Colonic mucosa (tissue), 4 donors: ENCODE measurements at regions of chr11 and their contacts with region 1.

Region 1: DNA sequence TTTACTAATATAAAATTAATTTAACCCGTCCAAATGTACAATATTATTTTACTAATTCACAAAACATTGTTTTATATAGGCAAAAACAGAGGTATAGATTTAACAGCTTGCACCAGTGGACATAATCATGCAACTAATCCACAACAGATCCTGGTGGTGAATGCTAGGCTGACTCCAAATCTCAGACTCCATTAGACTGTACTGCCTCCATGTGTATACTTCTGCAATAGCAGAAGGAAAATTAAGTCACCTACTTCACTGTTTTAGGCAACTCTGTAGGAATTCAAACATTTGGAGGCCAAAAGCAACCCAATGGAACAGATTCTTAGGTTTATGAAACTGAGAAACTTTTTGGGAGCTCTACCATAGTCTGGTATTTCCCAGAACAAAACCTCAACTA is 30.0 kb upstream of the RAB39A start:
- DNase-seq: no peak
- H3K4me3 ChIP-seq: no peak overlapping the region
- H3K27ac ChIP-seq: no peak overlapping the region
- H3K4me1 ChIP-seq: no peaks in the 10 kb centered on the region
- H3K27me3 ChIP-seq: no peaks in the 10 kb centered on the region
- CTCF ChIP-seq: peak; percentile 48

Region 2: DNA sequence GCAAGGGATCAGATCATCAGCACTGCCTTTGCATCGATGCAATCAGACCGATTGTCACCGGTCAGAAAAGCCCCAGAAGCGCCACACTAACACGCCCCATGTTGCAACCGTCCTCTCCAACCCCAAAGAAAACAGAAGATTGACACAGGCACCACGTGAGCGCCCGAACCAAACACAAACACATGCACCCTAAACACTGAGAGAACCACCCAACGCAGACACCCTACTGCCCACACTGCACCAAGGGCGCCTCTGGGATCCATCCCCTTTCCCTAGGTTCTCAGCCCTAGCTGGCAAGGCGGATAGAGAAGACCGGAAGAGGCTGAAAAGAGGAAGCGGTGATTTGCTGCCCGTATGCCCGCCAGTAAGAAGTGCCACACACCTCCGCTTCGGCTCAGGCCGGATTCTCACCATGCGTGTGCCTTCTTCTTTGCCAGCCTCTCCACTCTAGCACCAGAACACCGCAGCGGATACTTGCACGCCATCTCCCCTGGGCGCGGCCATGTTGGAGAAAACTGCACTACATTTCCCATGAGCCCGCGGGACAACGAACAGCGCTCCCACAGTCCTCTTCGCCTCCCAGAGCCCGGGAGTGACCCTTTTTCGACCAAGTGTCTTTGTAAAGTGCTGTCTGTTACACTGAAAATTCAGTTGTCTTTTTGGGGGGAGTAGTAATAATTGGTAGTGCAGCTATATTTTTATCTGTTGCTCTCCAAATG is 332.9 kb before region 1 on chr11 and contains the start of gene ALKBH8:
- intact Hi-C with region 1: no loop called
- DNase-seq: peak; percentile 83
- H3K4me3 ChIP-seq: peak within 1 kb of the TSS; percentile 66
- H3K27ac ChIP-seq: peak within 1 kb of the TSS; percentile 60
- H3K4me1 ChIP-seq: no peaks in the 10 kb centered on the region
- H3K27me3 ChIP-seq: no peaks in the 10 kb centered on the region
- CTCF ChIP-seq: no peak
- total RNA-seq, gene ALKBH8: 3.7 to 5.0 TPM

Region 3: GRCh38 chr11:107741044-107741823 is 157.0 kb before region 1 on chr11:
- intact Hi-C with region 1: loop called (anchors 5 kb)
- DNase-seq: no peak
- H3K4me3 ChIP-seq: no peak overlapping the region
- H3K27ac ChIP-seq: no peak overlapping the region
- H3K4me1 ChIP-seq: no peaks in the 10 kb centered on the region
- H3K27me3 ChIP-seq: no peaks in the 10 kb centered on the region
- CTCF ChIP-seq: peak; percentile 62

Region 4: GRCh38 chr11:107840129-107840484 is 58.2 kb before region 1 on chr11:
- intact Hi-C with region 1: no loop called
- DNase-seq: no peak
- H3K4me3 ChIP-seq: no peak overlapping the region
- H3K27ac ChIP-seq: peak overlapping the region; percentile 60
- H3K4me1 ChIP-seq: peaks cover 8% of the 10 kb centered on the region
- H3K27me3 ChIP-seq: no peaks in the 10 kb centered on the region
- CTCF ChIP-seq: no peak